ENCODE measurements at regions of chr3 and their contacts with region 1.

Region 1: GRCh38 chr3:86969500-86970189 is 21.3 kb downstream of the VGLL3 start:
- DNase-seq: peak; percentile 79
- H3K4me3 Mint-ChIP-seq: no peak overlapping the region
- H3K27ac Mint-ChIP-seq: no peak overlapping the region
- H3K4me1 Mint-ChIP-seq: peaks cover 18% of the 10 kb centered on the region
- H3K27me3 Mint-ChIP-seq: no peaks in the 10 kb centered on the region
- CTCF ChIP-seq: peak; percentile 72

Region 2: DNA sequence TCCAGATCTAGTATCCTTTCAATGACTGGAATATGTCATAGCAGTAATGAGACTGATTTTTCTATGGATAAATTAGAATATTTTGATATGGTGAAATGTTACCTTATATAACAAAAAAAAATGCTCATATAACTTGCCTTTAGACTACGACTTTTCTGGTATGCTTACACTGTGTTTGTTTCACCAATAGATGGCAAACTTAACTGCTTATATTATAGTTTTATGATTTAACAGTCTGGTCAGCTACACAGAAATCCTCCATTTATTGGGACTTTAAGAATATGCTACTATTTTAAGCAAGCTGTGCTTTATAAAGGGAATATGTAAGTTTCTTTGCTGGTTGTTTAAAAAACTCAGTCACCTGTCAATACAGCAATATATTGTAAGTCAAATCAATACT is 184.3 kb before region 1 on chr3:
- CTCF ChIA-PET with region 1: interaction called, 4 read pairs
- POLR2A ChIA-PET with region 1: no interaction called
- intact Hi-C with region 1: loop called (anchors 1 kb)
- DNase-seq: peak; percentile 35
- H3K4me3 Mint-ChIP-seq: no peak overlapping the region
- H3K27ac Mint-ChIP-seq: no peak overlapping the region
- H3K4me1 Mint-ChIP-seq: peaks cover 6% of the 10 kb centered on the region
- H3K27me3 Mint-ChIP-seq: no peaks in the 10 kb centered on the region
- CTCF ChIP-seq: peak; percentile 35

Region 3: GRCh38 chr3:86849991-86850390 is 119.7 kb before region 1 on chr3:
- CTCF ChIA-PET with region 1: no interaction called
- POLR2A ChIA-PET with region 1: no interaction called
- intact Hi-C with region 1: no loop called
- DNase-seq: no peak
- H3K4me3 Mint-ChIP-seq: no peak overlapping the region
- H3K27ac Mint-ChIP-seq: no peak overlapping the region
- H3K4me1 Mint-ChIP-seq: no peaks in the 10 kb centered on the region
- H3K27me3 Mint-ChIP-seq: no peaks in the 10 kb centered on the region
- CTCF ChIP-seq: no peak

Region 4: GRCh38 chr3:86948840-86949239 is 20.8 kb before region 1 on chr3:
- CTCF ChIA-PET with region 1: interaction called, 3 read pairs
- POLR2A ChIA-PET with region 1: interaction called, 3 read pairs
- intact Hi-C with region 1: loop called (anchors 2 kb)
- DNase-seq: peak; percentile 89
- H3K4me3 Mint-ChIP-seq: peak overlapping the region; percentile 38
- H3K27ac Mint-ChIP-seq: peak overlapping the region; percentile 75
- H3K4me1 Mint-ChIP-seq: peaks cover 45% of the 10 kb centered on the region
- H3K27me3 Mint-ChIP-seq: no peaks in the 10 kb centered on the region
- CTCF ChIP-seq: no peak

Region 5: GRCh38 chr3:87041191-87041590 is 71.5 kb after region 1 on chr3:
- CTCF ChIA-PET with region 1: no interaction called
- POLR2A ChIA-PET with region 1: no interaction called
- intact Hi-C with region 1: no loop called
- DNase-seq: no peak
- H3K4me3 Mint-ChIP-seq: no peak overlapping the region
- H3K27ac Mint-ChIP-seq: no peak overlapping the region
- H3K4me1 Mint-ChIP-seq: no peaks in the 10 kb centered on the region
- H3K27me3 Mint-ChIP-seq: no peaks in the 10 kb centered on the region
- CTCF ChIP-seq: no peak